ENCODE measurements at regions of chr13 and their contacts with region 1.

Region 1: GRCh38 chr13:34037636-34038540 is 219.9 kb downstream of the RFC3 start:
- DNase-seq: peak; percentile 51
- ATAC-seq: peak; percentile 16
- H3K4me3 ChIP-seq: no peak overlapping the region
- H3K27ac ChIP-seq: peak overlapping the region; percentile 94
- H3K4me1 ChIP-seq: peaks cover 38% of the 10 kb centered on the region
- H3K27me3 ChIP-seq: no peaks in the 10 kb centered on the region
- CTCF ChIP-seq: no peak

Region 2: GRCh38 chr13:34372581-34372980 is 334.7 kb after region 1 on chr13:
- CTCF ChIA-PET with region 1: no interaction called
- POLR2A ChIA-PET with region 1: no interaction called
- intact Hi-C with region 1: no loop called
- DNase-seq: peak; percentile 36
- ATAC-seq: peak; percentile 48
- H3K4me3 ChIP-seq: no peak overlapping the region
- H3K27ac ChIP-seq: no peak overlapping the region
- H3K4me1 ChIP-seq: peaks cover 4% of the 10 kb centered on the region; the same call in 1 of the 2 replicates
- H3K27me3 ChIP-seq: no peaks in the 10 kb centered on the region
- CTCF ChIP-seq: no peak; the same call in 1 of the 2 replicates

Region 3: DNA sequence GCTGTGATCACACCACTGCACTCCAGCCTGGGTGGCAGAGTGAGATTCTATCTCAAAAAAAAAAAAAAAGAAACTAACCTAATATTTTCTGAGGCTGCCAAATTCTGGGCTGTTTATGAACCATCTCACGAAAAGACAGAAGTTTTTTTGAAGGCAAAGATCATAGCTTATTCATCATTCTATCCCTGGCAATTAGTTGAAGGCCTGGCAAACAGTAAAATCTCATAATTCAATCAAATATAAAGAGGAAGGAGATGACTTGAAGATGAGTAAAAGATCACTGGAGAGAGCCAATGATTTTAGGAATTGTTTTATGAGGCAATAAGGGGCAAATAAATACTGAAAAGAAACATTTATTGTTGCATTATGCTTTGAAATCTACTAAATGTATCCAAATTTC is 1876.8 kb after region 1 on chr13:
- CTCF ChIA-PET with region 1: no interaction called
- POLR2A ChIA-PET with region 1: interaction called, 10 read pairs
- intact Hi-C with region 1: no loop called
- DNase-seq: peak; percentile 16
- ATAC-seq: peak; percentile 72
- H3K4me3 ChIP-seq: no peak overlapping the region
- H3K27ac ChIP-seq: peak overlapping the region; percentile 53
- H3K4me1 ChIP-seq: 0 out of 2 replicates have a peak, but pooled peaks cover 3% of the 10 kb centered on the region
- H3K27me3 ChIP-seq: no peaks in the 10 kb centered on the region
- CTCF ChIP-seq: no peak